ENCODE measurements at regions of chr1 and their contacts with region 1.

Region 1: GRCh38 chr1:93345633-93346420 is at the start of gene DR1:
- H3K4me3 ChIP-seq: peak within 1 kb of the TSS; percentile 99
- H3K27ac ChIP-seq: peak within 1 kb of the TSS; percentile 98
- H3K4me1 ChIP-seq: peaks cover 3% of the 10 kb centered on the region; the same call in 1 of the 2 replicates
- CTCF ChIP-seq: no peak; the same call in 1 of the 2 replicates

Region 2: DNA sequence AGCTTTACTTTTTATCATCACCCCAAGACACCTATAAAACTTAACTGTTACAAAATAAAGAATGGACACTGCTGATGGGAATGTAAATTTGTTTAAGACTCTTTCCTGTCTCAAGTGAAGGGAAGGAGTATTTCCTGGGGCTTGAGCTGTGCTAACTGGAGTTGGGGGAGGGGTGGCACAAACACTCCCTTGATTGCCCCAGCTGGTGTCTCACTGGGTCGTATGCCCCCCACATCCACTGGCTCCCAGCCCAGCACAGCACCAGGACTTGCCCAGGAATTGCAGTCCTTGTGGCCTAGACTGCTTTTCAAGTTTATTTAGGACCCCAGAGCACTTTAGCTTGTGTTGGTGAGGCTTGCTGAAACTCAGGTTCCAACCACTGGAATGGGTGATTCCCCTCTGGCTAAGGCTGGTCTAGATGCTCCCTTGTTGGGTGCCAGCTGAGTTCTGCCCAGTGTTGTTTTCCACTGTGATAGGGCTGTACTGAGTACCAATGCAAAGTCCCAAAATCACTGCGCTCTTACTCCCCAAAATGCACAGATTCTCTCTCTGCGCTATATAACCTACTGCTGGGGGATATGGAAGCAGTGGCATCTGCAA is 49.2 kb before region 1 on chr1:
- CTCF ChIA-PET with region 1: no interaction called
- POLR2A ChIA-PET with region 1: no interaction called
- H3K4me3 ChIP-seq: no peak overlapping the region
- H3K27ac ChIP-seq: no peak overlapping the region
- H3K4me1 ChIP-seq: no peaks in the 10 kb centered on the region
- CTCF ChIP-seq: no peak

Region 3: DNA sequence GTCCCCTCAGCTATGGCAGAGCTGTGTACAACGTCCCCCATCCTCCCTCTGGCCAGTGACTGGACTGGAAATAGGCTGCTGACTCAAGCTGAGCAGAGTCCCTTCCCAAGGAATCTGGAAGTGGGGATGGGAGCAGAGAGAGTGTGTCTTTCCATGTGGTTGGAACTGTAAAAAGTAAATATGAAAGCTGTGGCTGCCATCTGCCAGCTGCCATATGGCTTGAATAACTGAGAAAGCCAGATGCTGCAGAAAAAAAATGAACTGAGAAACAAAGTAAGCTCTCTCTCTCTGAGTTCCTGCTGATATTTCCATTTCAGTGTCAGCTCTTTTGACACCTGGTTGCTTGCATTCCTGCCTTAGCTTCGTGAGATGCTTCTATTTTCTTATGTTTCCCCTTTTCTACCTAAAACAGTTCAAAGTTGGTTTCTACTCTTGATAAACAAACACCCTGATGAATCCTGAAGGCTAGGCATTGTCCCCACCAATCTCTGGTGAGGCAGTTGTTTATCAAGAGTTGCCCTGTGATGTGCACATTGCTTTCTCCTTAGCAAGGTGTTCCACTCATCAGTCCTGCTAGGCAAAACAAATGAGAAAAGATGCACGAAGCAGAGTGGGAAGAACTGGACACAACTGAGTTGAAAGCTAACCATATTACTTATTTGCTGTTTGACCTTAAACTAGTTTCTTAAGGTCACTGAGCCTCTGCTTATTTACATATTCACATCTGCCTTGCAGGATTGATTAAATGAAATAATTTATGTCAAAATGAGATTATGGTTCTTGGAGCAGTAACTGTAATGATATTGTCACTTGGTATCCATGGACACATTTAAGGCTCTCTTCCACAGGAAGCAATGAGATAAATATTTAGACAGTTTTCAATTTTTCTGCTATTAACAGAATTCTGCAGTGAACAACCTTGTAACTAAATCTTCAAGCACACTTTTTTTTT is 16.7 kb before region 1 on chr1:
- CTCF ChIA-PET with region 1: no interaction called
- POLR2A ChIA-PET with region 1: interaction called, 12 read pairs
- H3K4me3 ChIP-seq: no peak overlapping the region
- H3K27ac ChIP-seq: no peak overlapping the region
- H3K4me1 ChIP-seq: peaks cover 6% of the 10 kb centered on the region; the same call in 1 of the 2 replicates
- CTCF ChIP-seq: no peak

Measured in HEK293 (cell line).